Spleen (tissue), 13 donors: ENCODE measurements at regions of chr17 and their contacts with region 1.

Region 1: DNA sequence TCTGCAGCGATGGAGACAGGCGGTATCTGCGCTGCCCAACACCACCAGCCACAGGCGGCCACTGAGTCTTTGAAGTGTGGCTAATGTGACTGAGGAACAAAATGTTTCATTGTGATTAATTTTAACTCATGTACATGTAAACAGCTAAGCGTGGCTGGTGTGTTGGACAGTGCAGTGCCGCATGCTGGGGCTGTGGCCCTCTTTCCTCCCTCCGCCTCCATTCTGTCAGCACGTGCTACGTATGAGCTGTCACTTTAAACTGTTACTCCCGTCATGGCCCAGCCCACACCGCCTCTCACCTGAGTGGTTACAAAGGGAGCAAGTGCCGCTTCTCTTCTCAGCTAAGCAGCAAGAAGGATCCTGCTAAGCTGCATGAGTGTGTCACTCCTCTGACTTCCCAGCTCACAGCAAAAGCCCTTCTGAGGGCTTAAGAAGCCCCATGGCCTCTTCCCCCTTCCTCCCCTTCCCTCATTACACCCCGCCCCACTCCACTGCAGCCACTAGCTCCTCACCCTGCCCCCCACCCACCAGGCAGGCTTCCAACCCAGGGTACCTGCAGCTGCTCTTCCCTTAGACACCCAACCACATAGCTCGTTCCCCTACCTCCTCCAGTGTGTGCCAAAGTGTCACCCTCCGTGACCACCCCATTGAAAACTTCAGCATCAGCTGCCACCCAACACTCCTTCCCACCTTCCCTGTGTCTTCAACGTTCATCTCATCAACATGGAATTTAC is 15.0 kb downstream of the HASPIN start:
- DNase-seq: no peak
- H3K4me3 ChIP-seq: no peak overlapping the region
- H3K27ac ChIP-seq: peak overlapping the region in 5 of 8 donors; percentile 13 to 79 (median 71)
- H3K4me1 ChIP-seq: peaks cover 13 to 67% (median 34%) of the 10 kb centered on the region in 6 donors
- H3K27me3 ChIP-seq: no peaks in the 10 kb centered on the region
- CTCF ChIP-seq: no peak
- POLR2A ChIP-seq: no peak

Region 2: GRCh38 chr17:3048767-3049471 is 689.8 kb before region 1 on chr17:
- intact Hi-C with region 1: no loop called
- DNase-seq: peak; percentile 97
- H3K4me3 ChIP-seq: peak overlapping the region; percentile 49 to 77 (median 62)
- H3K27ac ChIP-seq: peak overlapping the region in 7 of 8 donors; percentile 36 to 88 (median 76)
- H3K4me1 ChIP-seq: peaks cover 0 to 16% (median 14%) of the 10 kb centered on the region in 6 donors
- H3K27me3 ChIP-seq: peaks cover 0 to 6% (median 0%) of the 10 kb centered on the region in 7 donors
- CTCF ChIP-seq: peak; percentile 36 to 92 (median 75)
- POLR2A ChIP-seq: no peak

Region 3: GRCh38 chr17:3683054-3683511 is 55.6 kb before region 1 on chr17:
- intact Hi-C with region 1: loop called (anchors 10 kb)
- DNase-seq: no peak
- H3K4me3 ChIP-seq: no peak overlapping the region
- H3K27ac ChIP-seq: peak overlapping the region in 3 of 8 donors; percentile 64 to 89 (median 69)
- H3K4me1 ChIP-seq: peaks cover 3 to 63% (median 35%) of the 10 kb centered on the region in 6 donors
- H3K27me3 ChIP-seq: peaks cover 0 to 12% (median 0%) of the 10 kb centered on the region in 7 donors
- CTCF ChIP-seq: peak; percentile 81 to 96 (median 94)
- POLR2A ChIP-seq: no peak

Region 4: DNA sequence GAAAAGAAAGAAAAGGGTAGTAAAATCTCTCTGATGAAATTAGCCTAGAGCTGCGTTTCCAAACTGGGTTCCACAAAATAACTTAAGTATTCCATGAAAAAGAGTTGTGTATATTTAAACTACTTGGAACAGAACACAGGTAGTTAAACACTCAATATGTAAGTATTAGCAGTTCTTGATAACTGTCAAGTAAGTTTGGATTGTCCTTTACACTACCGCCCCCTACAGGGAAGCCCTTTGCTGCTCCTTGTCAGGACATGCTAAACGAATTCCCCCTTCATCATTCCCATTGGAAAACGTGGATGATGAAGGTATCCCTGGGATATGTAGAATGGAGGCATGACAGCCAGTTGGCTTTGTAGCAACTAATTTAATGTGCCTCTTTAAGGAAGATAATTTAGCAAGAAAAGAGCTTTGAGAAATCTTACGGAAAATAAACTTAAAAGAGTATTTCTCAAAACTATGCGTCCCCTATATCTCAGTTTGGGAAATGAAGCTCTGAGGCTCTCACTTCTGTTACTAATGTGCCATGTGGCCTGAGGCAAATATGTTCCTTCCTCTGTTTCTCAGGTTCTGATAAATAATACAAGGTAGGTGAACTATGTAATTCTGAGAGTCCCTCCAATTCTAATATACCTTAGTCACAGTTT is 88.5 kb after region 1 on chr17:
- intact Hi-C with region 1: loop called (anchors 5 kb)
- DNase-seq: no peak
- H3K4me3 ChIP-seq: no peak overlapping the region
- H3K27ac ChIP-seq: peak overlapping the region in 1 of 8 donors; percentile 15
- H3K4me1 ChIP-seq: peaks cover 0 to 16% (median 2%) of the 10 kb centered on the region in 6 donors
- H3K27me3 ChIP-seq: no peaks in the 10 kb centered on the region
- CTCF ChIP-seq: peak; percentile 47 to 77 (median 72)
- POLR2A ChIP-seq: no peak